ENCODE measurements at regions of chr16 and their contacts with region 1.

Region 1: DNA sequence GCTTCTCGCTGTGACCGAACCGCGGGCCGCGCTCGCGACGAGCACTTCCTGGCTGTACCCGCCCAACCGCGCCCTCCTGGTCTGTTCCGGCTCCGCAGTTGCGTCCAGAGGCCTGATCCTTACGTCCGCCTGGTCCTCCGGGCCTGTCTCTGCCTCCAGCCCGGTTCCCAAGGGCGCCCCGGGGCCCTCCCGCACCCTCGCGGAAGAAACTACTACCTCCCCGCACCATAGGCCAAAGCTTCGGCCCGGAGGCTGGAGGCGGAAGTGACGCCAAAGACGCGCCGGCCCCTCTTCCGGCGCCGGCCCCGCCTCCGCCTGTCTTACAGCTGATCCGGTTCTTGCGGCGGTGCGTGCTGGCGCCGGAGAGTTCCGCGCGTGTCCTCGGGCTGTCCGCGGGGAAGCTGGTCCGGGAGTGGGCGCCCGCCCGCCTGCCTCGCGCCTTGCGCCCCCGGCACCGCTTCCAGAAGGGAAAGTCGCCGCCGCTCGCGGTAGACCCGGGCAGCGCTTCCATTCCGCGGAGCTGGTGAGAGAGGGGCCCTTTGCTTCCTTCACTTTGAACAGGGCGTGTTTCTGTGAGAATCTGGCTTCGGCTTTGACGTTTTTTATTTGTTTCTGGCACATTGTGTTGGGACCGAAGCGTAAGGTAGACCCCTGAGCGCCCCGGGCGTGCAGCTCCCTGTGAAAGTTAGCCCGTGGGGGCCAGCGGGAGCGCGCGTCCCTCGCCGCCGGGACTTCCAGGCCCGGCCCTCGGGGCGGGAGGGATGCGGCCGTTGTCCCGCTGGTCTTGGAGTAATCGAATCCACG is at the start of gene ZNF778:
- DNase-seq: peak; percentile 80
- ATAC-seq: peak; percentile 86
- H3K4me3 Mint-ChIP-seq: peak within 1 kb of the TSS; percentile 91
- H3K27ac Mint-ChIP-seq: peak within 1 kb of the TSS; percentile 93
- H3K4me1 Mint-ChIP-seq: peaks cover 19% of the 10 kb centered on the region
- H3K27me3 Mint-ChIP-seq: no peaks in the 10 kb centered on the region
- CTCF ChIP-seq: no peak
- total RNA-seq, gene ZNF778: 7.2 and 11.4 TPM in 2 replicates

Region 2: GRCh38 chr16:88569985-88570690 is 647.5 kb before region 1 on chr16 and contains the start of gene ZC3H18:
- CTCF ChIA-PET with region 1: no interaction called
- POLR2A ChIA-PET with region 1: interaction called, 4 read pairs
- intact Hi-C with region 1: loop called (anchors 1 kb)
- DNase-seq: peak; percentile 99
- ATAC-seq: peak; percentile 92
- H3K4me3 Mint-ChIP-seq: peak within 1 kb of the TSS; percentile 86
- H3K27ac Mint-ChIP-seq: peak within 1 kb of the TSS; percentile 76
- H3K4me1 Mint-ChIP-seq: peaks cover 25% of the 10 kb centered on the region
- H3K27me3 Mint-ChIP-seq: no peaks in the 10 kb centered on the region
- CTCF ChIP-seq: no peak
- total RNA-seq, gene ZC3H18: 61.7 and 74.2 TPM in 2 replicates

Region 3: DNA sequence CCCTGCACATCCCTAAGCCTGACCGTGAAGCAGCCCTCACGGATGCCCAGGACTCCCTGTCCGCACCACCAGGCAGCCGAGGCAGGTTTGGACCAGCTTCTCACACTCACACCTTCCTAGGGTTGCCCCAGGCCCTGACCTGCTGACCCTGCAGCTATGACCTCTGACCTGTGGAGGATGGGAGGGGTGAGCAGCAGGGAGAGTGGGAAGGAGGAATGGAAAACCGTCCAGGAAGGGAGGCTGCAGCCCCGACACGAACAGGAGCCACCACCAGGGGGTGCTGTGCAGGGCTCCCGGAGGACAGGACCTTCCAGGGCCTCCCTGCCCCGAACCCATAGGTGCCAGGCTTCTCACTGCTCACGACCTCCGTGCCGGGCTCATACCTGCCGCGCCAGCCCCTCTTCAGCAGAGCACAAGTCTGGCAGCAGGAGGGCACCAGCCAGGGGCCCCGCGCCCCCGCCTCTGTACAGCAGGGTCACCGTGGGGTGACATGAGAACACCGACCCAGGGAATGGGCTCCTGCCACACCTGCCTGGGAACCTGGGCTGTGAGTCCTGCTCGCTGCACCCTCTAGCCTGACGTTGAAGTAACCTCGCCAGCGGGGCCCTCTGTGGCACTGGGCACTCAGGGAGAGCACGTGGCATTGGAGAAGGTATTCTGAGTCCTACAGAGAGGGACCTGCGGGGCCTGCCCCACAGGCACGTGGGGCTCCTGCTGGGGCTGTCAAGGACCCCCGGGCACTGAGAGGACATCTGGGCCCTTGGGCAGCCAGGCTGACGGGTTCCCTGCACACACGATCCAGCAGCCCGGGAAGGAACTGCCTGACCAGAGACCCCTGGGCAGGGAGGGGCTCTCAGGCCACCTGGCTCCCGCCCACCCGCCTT is 473.7 kb before region 1 on chr16:
- CTCF ChIA-PET with region 1: interaction called, 6 read pairs
- POLR2A ChIA-PET with region 1: interaction called, 4 read pairs
- intact Hi-C with region 1: loop called (anchors 2 kb)
- DNase-seq: peak; percentile 67
- ATAC-seq: no peak
- H3K4me3 Mint-ChIP-seq: no peak overlapping the region
- H3K27ac Mint-ChIP-seq: no peak overlapping the region
- H3K4me1 Mint-ChIP-seq: peaks cover 55% of the 10 kb centered on the region
- H3K27me3 Mint-ChIP-seq: no peaks in the 10 kb centered on the region
- CTCF ChIP-seq: peak; percentile 89

Region 4: GRCh38 chr16:88856828-88857733 is 360.5 kb before region 1 on chr16 and contains the starts of genes GALNS and TRAPPC2L:
- CTCF ChIA-PET with region 1: interaction called, 7 read pairs
- POLR2A ChIA-PET with region 1: interaction called, 3 read pairs
- intact Hi-C with region 1: loop called (anchors 1 kb)
- DNase-seq: peak; percentile 99
- ATAC-seq: peak; percentile 88
- H3K4me3 Mint-ChIP-seq: peak within 1 kb of the TSS; percentile 92
- H3K27ac Mint-ChIP-seq: peak within 1 kb of the TSS; percentile 86
- H3K4me1 Mint-ChIP-seq: peaks cover 39% of the 10 kb centered on the region
- H3K27me3 Mint-ChIP-seq: no peaks in the 10 kb centered on the region
- CTCF ChIP-seq: no peak
- total RNA-seq, gene GALNS: 39.9 and 48.3 TPM in 2 replicates
- total RNA-seq, gene TRAPPC2L: 38.7 and 54.8 TPM in 2 replicates

Region 5: GRCh38 chr16:88967830-88968588 is 249.6 kb before region 1 on chr16:
- CTCF ChIA-PET with region 1: no interaction called
- POLR2A ChIA-PET with region 1: interaction called, 5 read pairs
- intact Hi-C with region 1: loop called (anchors 1 kb)
- DNase-seq: peak; percentile 85
- ATAC-seq: peak; percentile 80
- H3K4me3 Mint-ChIP-seq: peak overlapping the region; percentile 75
- H3K27ac Mint-ChIP-seq: peak overlapping the region; percentile 86
- H3K4me1 Mint-ChIP-seq: peaks cover 86% of the 10 kb centered on the region
- H3K27me3 Mint-ChIP-seq: no peaks in the 10 kb centered on the region
- CTCF ChIP-seq: no peak

Region 6: GRCh38 chr16:89241187-89242007 is 23.8 kb after region 1 on chr16:
- CTCF ChIA-PET with region 1: no interaction called
- POLR2A ChIA-PET with region 1: interaction called, 10 read pairs
- intact Hi-C with region 1: loop called (anchors 1 kb)
- DNase-seq: peak; percentile 75
- ATAC-seq: peak; percentile 77
- H3K4me3 Mint-ChIP-seq: peak overlapping the region; percentile 99
- H3K27ac Mint-ChIP-seq: peak overlapping the region; percentile 99
- H3K4me1 Mint-ChIP-seq: peaks cover 29% of the 10 kb centered on the region
- H3K27me3 Mint-ChIP-seq: no peaks in the 10 kb centered on the region
- CTCF ChIP-seq: no peak